Motor neuron (in vitro differentiated cells): ENCODE measurements at regions of chr4 and their contacts with region 1.

Region 1: GRCh38 chr4:112031712-112032328 is 113.4 kb upstream of the FAM241A start:
- ATAC-seq: peak in 4 of 8 experiments; percentile 63 to 83 (median 70)
- H3K4me3 ChIP-seq: no peak overlapping the region
- H3K27ac ChIP-seq: no peak overlapping the region
- H3K4me1 ChIP-seq: no peaks in the 10 kb centered on the region

Region 2: GRCh38 chr4:111943795-111944203 is 88.0 kb before region 1 on chr4:
- in situ Hi-C with region 1: loop called in 2 of 9 experiments (anchors 10 to 25 kb)
- ATAC-seq: peak in 5 of 8 experiments; percentile 48 to 96 (median 88)
- H3K4me3 ChIP-seq: no peak overlapping the region
- H3K27ac ChIP-seq: no peak overlapping the region
- H3K4me1 ChIP-seq: no peaks in the 10 kb centered on the region

Region 3: DNA sequence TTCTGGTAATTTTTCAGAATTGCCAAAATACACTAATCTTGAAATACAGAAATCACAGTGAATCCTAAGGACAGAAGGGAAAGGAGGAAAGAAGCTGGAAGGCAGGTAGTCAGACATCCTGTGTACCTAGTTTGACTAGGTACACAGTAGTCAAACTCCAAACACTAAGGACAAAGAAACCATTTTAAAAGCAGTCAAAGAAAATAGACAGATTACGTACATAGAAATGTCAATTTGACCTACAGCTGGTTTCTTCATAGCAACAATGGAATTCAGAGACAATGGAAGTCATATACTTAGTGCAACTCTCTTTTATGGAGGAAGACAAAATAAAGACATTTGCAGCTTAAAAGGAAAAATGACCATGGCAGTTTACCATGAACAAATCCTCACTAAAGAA is 405.1 kb after region 1 on chr4:
- in situ Hi-C with region 1: no loop called
- ATAC-seq: no peak
- H3K4me3 ChIP-seq: no peak overlapping the region
- H3K27ac ChIP-seq: no peak overlapping the region
- H3K4me1 ChIP-seq: no peaks in the 10 kb centered on the region